Right cardiac atrium (tissue), 5 donors: ENCODE measurements at regions of chr1 and their contacts with region 1.

Region 1: GRCh38 chr1:39609618-39610331 is 29.7 kb downstream of the HEYL start:
- DNase-seq: peak; percentile 84 to 94 (median 93)
- ATAC-seq: peak; percentile 87 to 93
- H3K4me3 ChIP-seq: no peak overlapping the region
- H3K27ac ChIP-seq: no peak overlapping the region
- H3K4me1 ChIP-seq: no peaks in the 10 kb centered on the region
- H3K27me3 ChIP-seq: no peaks in the 10 kb centered on the region

Region 2: GRCh38 chr1:39509360-39510009 is 100.3 kb before region 1 on chr1:
- intact Hi-C with region 1: no loop called
- DNase-seq: peak in 2 of 3 donors; percentile 76 to 80
- ATAC-seq: peak; percentile 47 to 48
- H3K4me3 ChIP-seq: no peak overlapping the region
- H3K27ac ChIP-seq: no peak overlapping the region
- H3K4me1 ChIP-seq: no peaks in the 10 kb centered on the region
- H3K27me3 ChIP-seq: no peaks in the 10 kb centered on the region

Region 3: DNA sequence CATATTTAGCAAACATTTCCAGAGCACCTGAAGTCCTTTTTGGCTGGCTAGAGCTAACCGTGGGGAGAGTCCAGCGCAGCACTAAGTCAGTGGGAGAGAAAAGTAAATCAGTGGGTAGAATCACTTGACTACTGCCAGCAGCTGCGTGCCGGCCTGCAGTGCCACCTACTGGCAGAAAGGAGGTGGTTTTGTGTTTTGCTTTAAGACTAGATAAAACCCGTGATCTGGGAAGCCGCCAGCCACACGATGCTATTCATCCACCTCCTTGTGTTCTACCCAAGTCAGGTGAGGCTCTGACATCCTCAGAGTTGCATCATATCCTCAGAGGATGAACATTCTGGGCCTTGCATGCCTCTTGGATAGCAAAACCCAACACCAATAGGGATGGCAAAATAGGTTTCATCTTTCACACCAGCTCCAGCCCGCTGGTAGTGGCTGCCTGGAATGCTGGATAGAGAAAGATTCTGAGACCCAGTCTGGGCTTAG is 43.8 kb after region 1 on chr1:
- intact Hi-C with region 1: loop called (anchors 2 to 5 kb)
- DNase-seq: peak; percentile 80 to 92 (median 88)
- ATAC-seq: peak; percentile 64 to 68
- H3K4me3 ChIP-seq: no peak overlapping the region
- H3K27ac ChIP-seq: no peak overlapping the region
- H3K4me1 ChIP-seq: peaks cover 7% of the 10 kb centered on the region
- H3K27me3 ChIP-seq: no peaks in the 10 kb centered on the region

Region 4: DNA sequence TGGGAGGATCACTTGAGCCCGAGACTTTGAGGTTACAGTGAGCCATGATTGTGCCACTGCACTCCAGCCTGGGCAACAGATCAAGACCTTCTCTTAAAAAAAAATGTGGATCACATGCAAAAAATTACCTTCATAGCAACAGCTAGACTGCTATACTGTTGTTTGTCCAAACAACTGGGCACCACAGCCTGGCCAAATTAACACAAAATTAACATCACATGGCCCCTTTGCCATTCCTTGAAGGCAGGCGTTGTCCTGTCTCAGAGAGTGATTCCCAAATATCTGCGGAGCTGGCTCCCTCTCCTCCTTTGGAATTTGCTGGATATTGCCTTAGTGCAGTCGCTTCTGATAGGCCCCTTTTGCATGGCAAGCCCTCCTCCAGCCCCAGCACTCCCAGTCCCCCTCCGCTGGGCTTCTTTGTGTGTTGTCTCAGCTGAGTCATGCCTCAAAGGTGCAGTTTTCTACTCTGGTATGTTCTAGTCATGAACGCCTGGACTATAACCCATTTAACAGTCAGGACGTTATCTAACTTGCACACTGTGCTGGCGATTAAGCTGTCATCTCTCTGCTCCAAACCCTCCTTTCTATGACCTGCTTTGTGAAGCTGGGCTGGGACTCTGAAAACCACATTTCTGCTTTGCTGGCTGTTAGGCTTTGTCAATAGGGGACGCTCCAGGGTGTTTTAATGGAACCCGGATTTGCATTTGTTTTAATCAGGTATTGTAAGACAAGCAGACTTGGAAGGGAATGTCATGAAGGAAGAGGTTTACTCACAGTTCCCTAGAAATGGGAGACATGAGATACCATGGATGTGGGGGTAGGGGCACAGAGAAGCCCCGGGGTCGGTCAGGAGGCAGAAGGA is 101.6 kb after region 1 on chr1:
- intact Hi-C with region 1: loop called in 2 of 4 experiments (anchors 5 to 10 kb)
- DNase-seq: no peak
- ATAC-seq: peak in 1 of 2 donors; percentile 73
- H3K4me3 ChIP-seq: no peak overlapping the region
- H3K27ac ChIP-seq: no peak overlapping the region
- H3K4me1 ChIP-seq: no peaks in the 10 kb centered on the region
- H3K27me3 ChIP-seq: no peaks in the 10 kb centered on the region

Region 5: DNA sequence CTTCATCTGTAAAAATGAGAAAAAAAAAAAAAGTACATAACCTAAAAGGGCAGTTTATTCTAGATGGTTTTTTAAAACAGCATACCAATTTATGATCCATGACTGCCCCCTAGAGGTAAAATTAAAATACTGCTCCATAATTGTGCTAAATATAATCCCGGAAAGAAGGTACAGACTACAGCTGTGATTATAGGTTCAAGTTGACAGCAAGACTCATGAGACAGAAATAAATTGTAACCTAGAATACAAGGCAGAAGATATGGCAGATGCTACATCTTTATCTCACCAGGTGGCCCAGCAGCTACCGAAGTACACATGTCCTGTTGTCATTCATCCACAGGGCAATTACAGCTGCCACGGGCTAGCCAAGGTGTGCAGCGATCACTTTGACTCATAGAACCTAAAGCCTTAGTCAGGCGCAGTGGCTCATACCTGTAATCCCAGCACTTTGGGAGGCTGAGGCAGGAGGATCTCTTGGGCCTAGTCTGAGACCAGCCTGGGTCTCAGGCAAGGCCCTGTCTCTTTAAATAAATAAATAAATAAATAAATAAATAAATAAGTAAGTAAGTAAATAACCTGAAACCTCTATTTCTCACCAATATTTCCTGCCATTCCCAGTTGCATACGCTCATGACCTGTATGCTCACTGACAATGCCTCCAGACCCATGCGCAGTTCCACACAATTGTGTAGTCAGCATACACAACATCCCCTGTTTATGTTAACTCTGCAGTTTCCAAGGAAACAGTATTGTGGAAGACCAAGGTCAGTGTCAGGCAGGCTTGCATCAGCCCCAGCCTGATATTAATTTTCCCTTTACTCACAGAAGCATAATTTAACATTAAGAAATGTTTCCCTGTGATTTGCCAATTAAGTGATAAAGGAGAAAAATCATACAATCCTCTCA is 110.6 kb after region 1 on chr1:
- intact Hi-C with region 1: loop called in 3 of 4 experiments (anchors 5 to 10 kb)
- DNase-seq: no peak
- ATAC-seq: peak; percentile 51 to 58
- H3K4me3 ChIP-seq: no peak overlapping the region
- H3K27ac ChIP-seq: no peak overlapping the region
- H3K4me1 ChIP-seq: no peaks in the 10 kb centered on the region
- H3K27me3 ChIP-seq: no peaks in the 10 kb centered on the region

Region 6: DNA sequence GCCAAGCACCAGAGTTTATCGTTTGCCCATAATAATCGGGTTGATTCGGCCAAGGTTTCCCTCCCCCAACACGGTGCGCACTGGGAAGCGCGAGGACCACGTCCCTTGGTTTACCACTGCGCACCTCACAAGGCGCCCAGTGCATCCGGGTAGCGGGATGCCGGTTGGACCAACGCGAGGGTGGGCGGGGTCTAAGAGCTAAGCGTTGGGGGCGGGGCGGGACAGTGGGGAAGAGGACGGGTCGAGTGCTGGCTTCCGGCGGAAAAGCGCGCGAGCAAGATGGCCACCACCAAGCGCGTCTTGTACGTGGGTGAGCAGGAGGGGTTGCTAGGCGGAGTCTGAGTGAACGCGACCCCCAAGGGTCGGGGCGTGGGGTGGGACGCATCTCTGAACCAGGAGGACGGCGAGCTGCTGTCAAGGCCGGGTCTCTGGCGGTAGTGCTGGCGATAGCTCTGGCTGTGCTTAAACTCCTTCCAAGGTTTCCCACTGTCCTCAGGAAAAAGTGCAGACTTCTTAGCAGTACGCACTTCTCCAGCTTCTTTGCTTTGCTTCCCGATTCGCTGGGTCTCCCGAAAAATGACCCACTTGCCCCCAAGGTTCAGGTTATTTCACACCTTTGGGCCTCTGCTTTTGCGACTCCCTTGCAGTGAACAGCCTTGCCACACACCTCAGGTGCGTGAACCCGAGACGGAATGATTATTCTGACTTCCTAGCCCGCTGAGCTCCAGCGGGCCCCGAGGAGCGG is 129.0 kb after region 1 on chr1 and contains the start of gene PPIE:
- intact Hi-C with region 1: no loop called
- DNase-seq: peak; percentile 97 to 99 (median 98)
- ATAC-seq: peak; percentile 98
- H3K4me3 ChIP-seq: peak within 1 kb of the TSS; percentile 64
- H3K27ac ChIP-seq: peak within 1 kb of the TSS; percentile 17
- H3K4me1 ChIP-seq: peaks cover 2% of the 10 kb centered on the region
- H3K27me3 ChIP-seq: no peaks in the 10 kb centered on the region
- total RNA-seq, gene PPIE: 30.8 to 34.9 (median 34.1) TPM

Region 7: GRCh38 chr1:39799770-39800470 is 190.1 kb after region 1 on chr1:
- intact Hi-C with region 1: loop called in 1 of 4 experiments (anchors 10 kb)
- DNase-seq: peak; percentile 53 to 85 (median 81)
- ATAC-seq: peak; percentile 86 to 87
- H3K4me3 ChIP-seq: no peak overlapping the region
- H3K27ac ChIP-seq: no peak overlapping the region
- H3K4me1 ChIP-seq: no peaks in the 10 kb centered on the region
- H3K27me3 ChIP-seq: no peaks in the 10 kb centered on the region